SK-N-SH (cell line): ENCODE measurements at regions of chr7 and their contacts with region 1.

Region 1: GRCh38 chr7:130154501-130155317 is 50.5 kb downstream of the TMEM209 start:
- DNase-seq: peak; percentile 98
- H3K4me3 ChIP-seq: no peak overlapping the region; a peak in 1 of 4 replicates
- H3K27ac ChIP-seq: peak overlapping the region in 1 of 2 experiments; percentile 48; a peak in 2 of 4 replicates
- H3K4me1 ChIP-seq: peaks cover 0 to 16% of the 10 kb centered on the region in 2 experiments; a peak in 1 of 4 replicates
- H3K27me3 ChIP-seq: no peaks in the 10 kb centered on the region
- CTCF ChIP-seq: peak; percentile 45
- EP300 ChIP-seq: peak in 1 of 2 experiments; percentile 71; a peak in 2 of 4 replicates
- RAD21 ChIP-seq: no peak; the same call in 1 of the 2 replicates

Region 2: GRCh38 chr7:130141161-130141883 is 13.4 kb before region 1 on chr7:
- CTCF ChIA-PET with region 1: interaction called, 4 read pairs
- POLR2A ChIA-PET with region 1: interaction called, 19 read pairs
- DNase-seq: peak; percentile 95
- H3K4me3 ChIP-seq: peak overlapping the region in 1 of 2 experiments; percentile 19; a peak in 1 of 4 replicates
- H3K27ac ChIP-seq: peak overlapping the region in 1 of 2 experiments; percentile 12; a peak in 1 of 4 replicates
- H3K4me1 ChIP-seq: peaks cover 5 to 15% of the 10 kb centered on the region in 2 experiments; a peak in 2 of 4 replicates
- H3K27me3 ChIP-seq: no peaks in the 10 kb centered on the region
- CTCF ChIP-seq: no peak
- EP300 ChIP-seq: no peak
- RAD21 ChIP-seq: no peak